ENCODE measurements at regions of chr10 and their contacts with region 1.

Region 1: DNA sequence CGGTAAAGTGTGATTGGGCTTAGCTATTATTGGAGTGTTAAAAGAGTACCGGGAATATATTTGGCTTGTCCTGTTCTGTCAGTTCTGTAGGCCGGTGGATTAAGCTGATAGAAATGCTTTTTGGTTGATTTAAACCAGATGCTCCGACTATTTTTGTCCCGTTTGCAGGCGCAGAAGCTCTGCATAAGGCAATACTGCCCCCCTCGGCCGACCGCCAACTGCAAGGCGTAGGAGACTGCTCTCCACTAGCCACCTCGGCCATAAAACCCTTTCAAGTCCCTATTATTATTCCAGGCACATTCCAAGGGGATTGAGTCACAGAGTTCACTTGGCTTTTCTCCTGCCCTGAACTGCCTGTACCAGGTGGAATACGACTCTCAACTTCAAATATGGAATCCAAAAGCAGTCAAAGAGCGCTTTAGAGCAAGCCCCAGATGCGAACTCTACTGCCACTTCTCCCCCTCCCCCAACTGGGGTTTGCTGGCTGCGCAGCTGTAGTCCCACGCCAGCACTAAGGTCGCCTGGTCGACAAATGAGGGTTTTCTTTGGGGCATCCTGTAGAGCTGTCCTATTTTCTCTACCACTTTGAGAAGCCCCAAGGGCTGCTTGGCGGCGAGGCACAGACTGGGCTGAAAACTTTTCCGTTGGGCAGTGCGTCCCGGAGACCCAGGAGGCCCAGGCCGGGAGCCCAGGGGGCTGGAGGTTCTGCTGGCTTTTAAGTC is 108.3 kb downstream of the REEP3 start:
- DNase-seq: peak; percentile 53 to 95 (median 72)
- ATAC-seq: peak; percentile 86
- H3K4me3 ChIP-seq: peak overlapping the region; percentile 60
- H3K27ac ChIP-seq: peak overlapping the region; percentile 73
- H3K4me1 ChIP-seq: peaks cover 19 to 20% of the 10 kb centered on the region in 2 experiments; a peak in 4 of 5 replicates
- H3K27me3 ChIP-seq: no peaks in the 10 kb centered on the region
- CTCF ChIP-seq: peak; percentile 91 to 97 (median 97)
- EP300 ChIP-seq: no peak
- POLR2A ChIP-seq: no peak
- RAD21 ChIP-seq: peak; percentile 88 to 91

Region 2: DNA sequence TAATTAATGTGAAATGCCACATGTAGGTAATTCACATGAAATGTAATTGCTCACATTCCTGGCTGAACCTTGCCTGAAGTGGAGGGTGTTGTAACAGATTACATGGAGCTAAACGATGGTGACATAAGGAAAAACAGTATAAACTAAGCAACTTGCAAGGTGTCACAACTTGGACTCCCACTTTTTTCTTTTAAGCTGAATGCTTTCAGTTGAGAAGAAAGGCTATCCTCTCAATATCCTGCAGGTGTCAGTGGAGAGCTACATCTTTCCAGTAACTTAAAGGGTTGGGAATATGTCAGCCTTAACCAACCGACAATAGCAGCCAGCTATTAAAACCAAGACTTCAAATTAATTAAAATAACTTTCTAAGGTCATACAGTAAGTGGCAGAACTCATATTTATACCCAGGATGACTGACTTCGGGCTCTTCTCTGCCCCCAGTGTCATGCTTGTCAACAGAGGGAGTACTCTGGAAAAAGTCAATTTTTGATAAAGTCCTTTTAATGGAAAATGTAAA is 462.7 kb before region 1 on chr10:
- CTCF ChIA-PET with region 1: interaction called, 4 read pairs
- POLR2A ChIA-PET with region 1: interaction called, 13 read pairs
- in situ Hi-C with region 1: no loop called
- intact Hi-C with region 1: loop called (anchors 1 kb)
- DNase-seq: peak; percentile 40 to 80 (median 61)
- ATAC-seq: peak; percentile 83
- H3K4me3 ChIP-seq: no peak overlapping the region
- H3K27ac ChIP-seq: no peak overlapping the region
- H3K4me1 ChIP-seq: no peaks in the 10 kb centered on the region
- H3K27me3 ChIP-seq: no peaks in the 10 kb centered on the region
- CTCF ChIP-seq: peak; percentile 68 to 89 (median 75)
- EP300 ChIP-seq: no peak
- POLR2A ChIP-seq: 0 out of 2 replicates have a peak, but pooled peaks have one; percentile 38
- RAD21 ChIP-seq: peak; percentile 91

Region 3: DNA sequence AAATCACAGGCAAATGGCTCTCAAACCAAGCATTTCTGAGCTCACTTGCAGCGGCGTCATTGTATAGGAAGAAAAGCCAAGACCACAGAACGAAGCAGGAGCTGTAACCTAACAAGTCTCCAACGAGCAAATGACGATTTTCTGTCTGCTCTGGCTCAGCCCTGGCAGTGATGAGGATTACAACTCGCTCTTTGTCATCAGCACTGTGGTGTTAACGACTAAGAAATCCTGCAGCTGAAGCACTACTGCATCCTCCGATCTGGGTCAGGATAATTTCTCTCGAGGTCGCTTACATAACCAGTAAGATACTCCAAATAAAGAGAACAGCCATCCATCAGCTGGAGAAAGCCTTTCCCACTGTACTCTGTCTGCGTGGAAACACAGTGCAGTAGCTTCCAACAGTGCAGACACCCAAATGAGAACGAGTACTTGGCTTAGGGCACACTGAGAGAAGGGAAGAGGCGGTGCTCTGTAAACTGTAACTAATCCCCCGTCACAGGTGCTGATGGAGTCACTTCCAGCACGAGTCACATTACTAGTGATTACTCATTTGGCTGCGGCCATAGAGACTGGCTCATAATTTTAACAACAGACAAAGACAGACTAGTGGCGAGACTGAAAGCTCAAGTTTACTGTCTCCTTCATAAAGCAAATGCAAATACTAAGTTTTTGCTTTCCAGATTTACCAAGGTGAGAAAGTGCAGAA is 360.6 kb before region 1 on chr10:
- CTCF ChIA-PET with region 1: no interaction called
- POLR2A ChIA-PET with region 1: interaction called, 33 read pairs
- in situ Hi-C with region 1: no loop called
- intact Hi-C with region 1: loop called (anchors 2 kb)
- DNase-seq: peak; percentile 63 to 96 (median 78)
- ATAC-seq: peak; percentile 88
- H3K4me3 ChIP-seq: peak overlapping the region; percentile 53
- H3K27ac ChIP-seq: peak overlapping the region; percentile 78
- H3K4me1 ChIP-seq: peaks cover 3% of the 10 kb centered on the region in 2 experiments; a peak in 1 of 5 replicates
- H3K27me3 ChIP-seq: no peaks in the 10 kb centered on the region
- CTCF ChIP-seq: peak in 2 of 3 experiments; percentile 32 to 40
- EP300 ChIP-seq: peak; percentile 82
- POLR2A ChIP-seq: peak; percentile 97
- RAD21 ChIP-seq: 0 out of 4 replicates have a peak, but pooled peaks of 1 of the 2 experiments have one; percentile 18

Region 4: DNA sequence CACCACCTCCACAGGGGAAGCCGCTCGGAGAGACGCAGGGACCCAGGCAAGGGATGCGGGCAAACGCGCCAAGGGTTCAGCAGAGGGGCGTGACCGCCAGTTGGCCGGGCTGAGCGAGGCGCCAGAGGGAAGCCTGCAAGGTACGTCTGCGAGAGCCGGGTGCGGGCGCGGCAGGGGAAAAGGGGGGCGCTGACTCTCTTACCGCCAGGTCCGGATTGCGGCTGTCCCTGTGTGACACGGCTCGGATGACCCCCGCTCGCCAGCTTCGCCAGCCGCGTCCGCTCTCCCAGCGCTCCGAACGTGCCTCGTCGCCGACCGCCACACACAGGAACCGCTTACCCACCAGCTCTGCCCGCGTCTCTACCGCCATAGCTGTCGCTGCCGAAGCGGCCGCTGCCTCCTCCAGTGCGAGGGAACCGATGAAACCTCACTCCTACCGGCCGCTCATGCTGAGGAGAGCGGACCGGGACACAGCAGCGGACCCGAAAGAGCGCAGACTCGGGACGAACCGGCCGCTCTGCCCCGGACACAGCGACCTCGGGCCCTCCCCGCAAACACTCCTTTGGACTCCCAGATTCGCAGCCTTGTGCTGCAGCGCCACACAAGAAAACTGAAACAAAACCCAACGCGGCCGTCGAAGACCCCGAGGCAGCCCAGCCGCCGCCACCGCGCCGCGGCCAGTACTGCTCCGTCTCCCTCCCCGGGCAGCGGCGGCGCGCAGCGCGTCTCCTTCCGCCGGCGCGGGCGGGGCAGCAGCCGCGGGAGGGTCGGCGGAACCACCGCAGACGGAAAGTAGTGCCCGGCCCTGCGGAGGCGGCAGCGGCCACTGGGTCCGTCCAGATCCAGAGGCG is 164.0 kb before region 1 on chr10 and contains the start of gene JMJD1C:
- CTCF ChIA-PET with region 1: interaction called, 3 read pairs
- POLR2A ChIA-PET with region 1: no interaction called
- in situ Hi-C with region 1: no loop called
- intact Hi-C with region 1: loop called (anchors 1 kb)
- DNase-seq: peak; percentile 82 to 87 (median 84)
- ATAC-seq: peak; percentile 83
- H3K4me3 ChIP-seq: peak within 1 kb of the TSS; percentile 73
- H3K27ac ChIP-seq: peak within 1 kb of the TSS; percentile 89
- H3K4me1 ChIP-seq: peaks cover 0 to 19% of the 10 kb centered on the region in 2 experiments; a peak in 4 of 5 replicates
- H3K27me3 ChIP-seq: no peaks in the 10 kb centered on the region
- CTCF ChIP-seq: peak in 2 of 3 experiments; percentile 1 to 24; a peak in 2 of 6 replicates
- EP300 ChIP-seq: no peak
- POLR2A ChIP-seq: peak; percentile 86
- RAD21 ChIP-seq: peak in 1 of 2 experiments; percentile 10; a peak in 3 of 4 replicates
- polyA plus RNA-seq, gene JMJD1C: 25.3 to 38.5 TPM

Region 5: GRCh38 chr10:63521416-63522276 is 107.9 kb before region 1 on chr10:
- CTCF ChIA-PET with region 1: no interaction called
- POLR2A ChIA-PET with region 1: interaction called, 5 read pairs
- in situ Hi-C with region 1: no loop called
- intact Hi-C with region 1: loop called (anchors 5 kb)
- DNase-seq: peak; percentile 81 to 87 (median 82)
- ATAC-seq: peak; percentile 89
- H3K4me3 ChIP-seq: peak overlapping the region; percentile 76
- H3K27ac ChIP-seq: peak overlapping the region; percentile 96
- H3K4me1 ChIP-seq: peaks cover 16% of the 10 kb centered on the region in 2 experiments; a peak in 4 of 5 replicates
- H3K27me3 ChIP-seq: no peaks in the 10 kb centered on the region
- CTCF ChIP-seq: no peak
- EP300 ChIP-seq: no peak
- POLR2A ChIP-seq: peak; percentile 75
- RAD21 ChIP-seq: peak in 1 of 2 experiments; percentile 13; a peak in 2 of 4 replicates

Region 6: DNA sequence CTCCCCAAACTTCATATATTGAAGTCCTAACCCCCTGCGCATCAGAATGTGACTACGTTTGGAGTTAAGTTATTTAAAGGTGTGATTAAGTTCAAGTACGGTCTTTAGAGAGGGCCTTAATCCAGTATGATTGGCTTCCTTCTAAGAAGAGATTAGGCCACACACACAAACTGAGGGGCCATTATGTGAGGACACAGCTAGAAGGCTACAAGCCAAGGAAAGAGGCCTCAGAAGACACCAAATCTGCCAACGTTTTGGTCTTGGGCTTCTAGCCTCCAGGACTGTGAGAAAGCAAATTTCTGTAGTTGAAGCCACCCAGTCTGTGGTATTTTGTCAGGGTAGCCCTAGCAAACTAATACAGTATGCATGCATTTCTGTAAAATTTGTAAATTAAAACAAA is 66.7 kb before region 1 on chr10:
- CTCF ChIA-PET with region 1: no interaction called
- POLR2A ChIA-PET with region 1: no interaction called
- in situ Hi-C with region 1: no loop called
- intact Hi-C with region 1: no loop called
- DNase-seq: peak in 1 of 4 experiments; percentile 15
- ATAC-seq: peak; percentile 76
- H3K4me3 ChIP-seq: no peak overlapping the region
- H3K27ac ChIP-seq: no peak overlapping the region
- H3K4me1 ChIP-seq: peaks cover 0 to 5% of the 10 kb centered on the region in 2 experiments; a peak in 1 of 5 replicates
- H3K27me3 ChIP-seq: no peaks in the 10 kb centered on the region
- CTCF ChIP-seq: no peak
- EP300 ChIP-seq: no peak
- POLR2A ChIP-seq: no peak
- RAD21 ChIP-seq: no peak

Region 7: DNA sequence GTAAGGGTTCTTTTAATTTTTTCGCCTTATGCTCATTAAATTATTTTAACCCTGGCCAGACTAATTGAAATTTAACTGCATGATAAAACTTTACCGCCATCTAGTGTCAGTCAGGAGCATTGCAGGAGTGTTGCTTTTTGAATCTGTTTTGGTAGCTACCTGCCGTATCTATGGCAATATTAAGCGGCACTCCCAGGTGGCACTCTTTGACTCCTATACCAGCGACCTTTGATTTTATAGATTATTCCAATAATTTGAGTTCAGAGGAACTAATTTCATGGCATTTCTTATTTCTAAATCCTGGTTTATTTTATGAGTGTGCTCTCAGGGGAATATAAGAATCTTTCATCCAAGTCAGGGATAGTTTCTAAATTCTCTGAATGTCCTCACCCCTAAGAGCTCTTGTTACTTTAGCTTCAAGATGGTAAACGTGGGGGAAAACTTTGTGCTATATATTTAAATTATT is 90.6 kb after region 1 on chr10:
- CTCF ChIA-PET with region 1: interaction called, 3 read pairs
- POLR2A ChIA-PET with region 1: interaction called, 3 read pairs
- in situ Hi-C with region 1: loop called (anchors 5 kb)
- intact Hi-C with region 1: loop called (anchors 2 kb)
- DNase-seq: peak; percentile 46 to 66 (median 61)
- ATAC-seq: peak; percentile 56
- H3K4me3 ChIP-seq: no peak overlapping the region
- H3K27ac ChIP-seq: no peak overlapping the region
- H3K4me1 ChIP-seq: no peaks in the 10 kb centered on the region
- H3K27me3 ChIP-seq: peaks cover 20 to 40% of the 10 kb centered on the region in 2 experiments
- CTCF ChIP-seq: peak; percentile 82 to 98 (median 83)
- EP300 ChIP-seq: no peak
- POLR2A ChIP-seq: no peak
- RAD21 ChIP-seq: peak; percentile 96